ENCODE measurements at regions of chr2 and their contacts with region 1.

Region 1: DNA sequence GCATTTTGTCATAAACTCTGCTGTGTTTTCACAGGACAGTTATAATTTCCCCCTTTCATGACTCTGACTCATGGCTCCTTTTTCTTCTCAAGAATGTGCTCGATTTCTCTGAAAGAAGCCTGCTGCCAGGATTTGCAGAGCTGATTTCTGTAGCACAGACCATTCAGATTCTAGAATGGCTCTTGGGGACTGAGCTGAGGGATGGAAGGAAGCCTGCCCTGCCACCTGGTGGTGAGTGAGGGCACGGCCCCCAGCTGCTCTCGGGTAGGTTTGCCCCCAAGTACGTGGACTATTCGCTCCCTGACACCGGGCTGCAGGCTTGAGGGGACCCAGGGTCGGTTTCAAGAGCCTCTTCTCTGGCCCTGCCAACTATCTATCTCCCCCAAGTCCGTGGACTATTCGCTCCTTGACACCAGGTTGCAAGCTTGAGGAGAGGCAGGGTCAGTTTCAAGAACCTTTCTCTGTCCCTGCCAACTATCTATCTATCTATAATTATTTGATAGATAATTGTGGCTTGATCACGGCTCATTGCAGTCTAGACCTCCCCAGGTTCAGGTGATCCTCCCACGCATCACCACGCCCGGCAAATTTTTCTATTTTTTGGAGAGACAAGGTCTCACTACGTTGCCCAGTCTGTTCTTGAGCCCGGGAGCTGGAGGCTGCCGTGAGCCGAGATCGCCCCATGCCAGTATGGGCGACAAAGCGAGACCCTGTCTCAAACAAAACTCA is 1.4 kb upstream of the SMYD5 start:
- DNase-seq: peak; percentile 56 to 77 (median 60)
- H3K4me3 ChIP-seq: no peak overlapping the region
- H3K4me3 Mint-ChIP-seq: peak overlapping the region; percentile 58 to 95 (median 68)
- H3K27ac ChIP-seq: peak overlapping the region; percentile 61
- H3K27ac Mint-ChIP-seq: peak overlapping the region in 7 of 8 donors; percentile 10 to 96 (median 53)
- H3K4me1 ChIP-seq: peaks cover 28% of the 10 kb centered on the region
- H3K4me1 Mint-ChIP-seq: peaks cover 28 to 38% (median 29%) of the 10 kb centered on the region in 3 donors
- H3K27me3 ChIP-seq: no peaks in the 10 kb centered on the region
- H3K27me3 Mint-ChIP-seq: peaks cover 5 to 13% of the 10 kb centered on the region in 2 donors

Region 2: DNA sequence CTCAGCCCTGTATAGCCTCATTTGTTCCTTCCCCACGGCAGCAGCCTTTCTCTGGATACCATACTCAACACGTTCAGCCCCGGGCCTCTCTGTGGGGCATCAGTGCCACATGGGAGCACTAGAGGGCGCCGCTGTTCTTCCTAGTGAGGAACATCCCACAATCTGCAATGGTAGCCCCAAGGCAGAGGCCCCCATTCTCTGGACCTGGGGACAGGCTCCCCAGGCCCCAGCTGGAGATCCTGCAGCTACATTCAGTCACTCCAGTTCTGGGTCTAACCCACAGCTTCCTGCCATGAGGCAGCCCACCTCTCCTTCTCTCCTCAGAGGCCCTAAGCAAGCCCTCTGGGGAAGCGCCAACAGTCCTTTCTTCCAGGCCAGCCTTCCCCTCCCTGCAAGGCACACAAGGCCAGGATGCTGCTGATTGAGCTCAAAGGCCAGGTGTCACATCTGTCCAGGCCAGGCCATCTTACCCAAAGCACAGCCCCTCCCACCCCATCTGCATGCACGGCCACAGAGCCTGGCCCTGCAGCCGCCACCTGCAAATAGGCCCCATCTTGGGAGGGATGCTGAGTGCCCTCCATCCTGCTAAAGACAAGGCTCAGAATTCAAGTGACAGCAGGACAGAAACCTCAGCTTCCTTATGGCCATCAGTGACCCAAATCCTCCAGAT is 126.8 kb before region 1 on chr2:
- CTCF ChIA-PET with region 1: interaction called, 42 read pairs
- POLR2A ChIA-PET with region 1: no interaction called
- DNase-seq: peak; percentile 62 to 86 (median 72)
- H3K4me3 ChIP-seq: no peak overlapping the region
- H3K4me3 Mint-ChIP-seq: no peak overlapping the region
- H3K27ac ChIP-seq: no peak overlapping the region
- H3K27ac Mint-ChIP-seq: no peak overlapping the region
- H3K4me1 ChIP-seq: no peaks in the 10 kb centered on the region
- H3K4me1 Mint-ChIP-seq: peaks cover 0 to 2% (median 0%) of the 10 kb centered on the region in 3 donors
- H3K27me3 ChIP-seq: no peaks in the 10 kb centered on the region
- H3K27me3 Mint-ChIP-seq: no peaks in the 10 kb centered on the region

Region 3: DNA sequence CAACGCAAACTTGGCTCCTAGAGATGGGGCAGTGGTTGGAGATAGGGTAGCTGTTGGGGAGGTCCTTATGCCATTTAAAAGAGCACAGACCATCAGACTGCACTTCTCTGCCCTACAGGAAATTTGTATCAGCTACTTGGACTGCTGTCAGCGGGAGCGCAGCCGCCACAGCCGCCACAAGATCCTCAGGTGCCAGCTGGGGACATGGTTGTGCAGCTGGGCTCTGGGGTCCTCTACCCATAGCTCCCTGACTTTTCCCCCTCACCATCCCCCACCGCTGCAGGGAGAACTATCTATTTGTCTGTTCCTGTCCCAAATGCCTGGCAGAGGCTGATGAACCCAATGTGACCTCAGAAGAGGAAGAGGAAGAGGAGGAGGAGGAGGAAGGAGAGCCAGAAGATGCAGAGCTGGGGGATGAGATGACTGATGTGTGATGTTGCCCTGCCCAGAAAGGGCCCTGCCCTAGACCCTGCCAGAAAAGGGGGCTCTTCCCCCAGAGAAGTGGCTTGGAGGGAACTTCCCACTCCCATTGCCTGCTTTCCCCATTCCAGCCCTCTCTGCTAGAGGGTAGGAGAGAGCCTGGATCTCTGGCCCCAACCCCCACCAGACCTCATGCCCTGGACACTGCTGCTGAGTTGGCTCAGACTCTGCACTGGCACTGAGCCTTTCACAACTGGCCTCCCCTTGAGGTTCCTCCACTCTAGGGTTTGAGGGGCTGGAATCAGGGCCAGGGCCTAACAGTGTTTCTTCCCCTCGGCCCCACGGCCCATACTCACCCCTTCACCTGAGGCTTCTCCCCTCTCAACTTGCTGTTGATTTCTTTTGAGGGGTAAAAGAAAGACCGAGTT is 13.1 kb after region 1 on chr2:
- CTCF ChIA-PET with region 1: interaction called, 26 read pairs
- POLR2A ChIA-PET with region 1: no interaction called
- DNase-seq: no peak
- H3K4me3 ChIP-seq: no peak overlapping the region
- H3K4me3 Mint-ChIP-seq: no peak overlapping the region
- H3K27ac ChIP-seq: no peak overlapping the region
- H3K27ac Mint-ChIP-seq: peak overlapping the region in 2 of 8 donors; percentile 35 to 54
- H3K4me1 ChIP-seq: no peaks in the 10 kb centered on the region
- H3K4me1 Mint-ChIP-seq: no peaks in the 10 kb centered on the region
- H3K27me3 ChIP-seq: no peaks in the 10 kb centered on the region
- H3K27me3 Mint-ChIP-seq: no peaks in the 10 kb centered on the region

Region 4: DNA sequence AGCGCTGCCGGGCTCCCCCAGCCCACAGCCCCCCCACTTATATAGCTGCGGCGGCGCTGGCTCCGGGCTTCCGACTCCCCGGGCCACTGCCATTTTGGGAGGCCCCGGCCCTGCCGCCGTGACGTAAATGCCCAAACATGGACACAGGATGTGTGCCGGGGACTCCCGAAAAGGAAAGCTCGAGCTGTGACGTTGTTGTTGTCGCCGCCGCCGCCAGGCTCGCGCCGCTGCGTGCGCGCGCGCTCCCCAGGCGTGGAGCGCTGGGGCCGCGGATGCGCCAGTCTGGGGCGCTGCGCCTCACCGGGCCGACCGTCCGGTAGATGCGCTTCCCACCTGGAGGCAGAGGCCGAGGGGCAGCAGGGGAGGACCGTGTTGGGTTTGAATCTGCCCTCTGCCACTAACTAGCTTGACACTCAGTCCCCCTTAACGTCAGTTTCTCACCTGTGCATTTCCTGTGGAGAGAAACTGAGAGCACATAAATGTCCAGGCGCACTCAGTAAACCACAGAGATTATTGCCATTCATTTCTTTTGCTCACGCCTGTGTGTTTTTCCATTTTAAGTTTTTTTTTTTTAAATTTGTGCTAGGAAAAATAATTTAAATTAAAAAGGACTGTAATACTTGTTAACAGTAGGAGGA is 81.0 kb after region 1 on chr2 and contains the start of gene EGR4:
- CTCF ChIA-PET with region 1: interaction called, 15 read pairs
- POLR2A ChIA-PET with region 1: no interaction called
- DNase-seq: peak; percentile 85 to 95 (median 88)
- H3K4me3 ChIP-seq: peak within 1 kb of the TSS; percentile 21
- H3K4me3 Mint-ChIP-seq: peak within 1 kb of the TSS; percentile 65 to 90 (median 79)
- H3K27ac ChIP-seq: no peak within 1 kb of the TSS
- H3K27ac Mint-ChIP-seq: peak within 1 kb of the TSS in 4 of 8 donors; percentile 12 to 58 (median 27)
- H3K4me1 ChIP-seq: peaks cover 27% of the 10 kb centered on the region
- H3K4me1 Mint-ChIP-seq: peaks cover 8 to 34% (median 20%) of the 10 kb centered on the region in 3 donors
- H3K27me3 ChIP-seq: peaks cover 50% of the 10 kb centered on the region
- H3K27me3 Mint-ChIP-seq: peaks cover 46 to 67% of the 10 kb centered on the region in 2 donors
- total RNA-seq, gene EGR4: 0.31 to 0.55 TPM

Measured in CD8-positive, alpha-beta memory T cell (primary cell).